Activated B cell treated with CpG ODN at 0.5 μM for 24 hours (primary cell): ENCODE measurements at regions of chr1 and their contacts with region 1.

Region 1: GRCh38 chr1:150813058-150813707 is 5.1 kb upstream of the CTSK start:
- DNase-seq: no peak
- ATAC-seq: no peak
- H3K4me3 Mint-ChIP-seq: no peak overlapping the region
- H3K27ac Mint-ChIP-seq: no peak overlapping the region
- H3K4me1 Mint-ChIP-seq: no peaks in the 10 kb centered on the region
- H3K27me3 Mint-ChIP-seq: no peaks in the 10 kb centered on the region
- CTCF ChIP-seq: no peak

Region 2: GRCh38 chr1:150346316-150346715 is 466.9 kb before region 1 on chr1:
- CTCF ChIA-PET with region 1: no interaction called
- POLR2A ChIA-PET with region 1: no interaction called
- intact Hi-C with region 1: no loop called
- DNase-seq: no peak
- ATAC-seq: no peak
- H3K4me3 Mint-ChIP-seq: no peak overlapping the region
- H3K27ac Mint-ChIP-seq: no peak overlapping the region
- H3K4me1 Mint-ChIP-seq: no peaks in the 10 kb centered on the region
- H3K27me3 Mint-ChIP-seq: no peaks in the 10 kb centered on the region
- CTCF ChIP-seq: no peak

Region 3: GRCh38 chr1:150760013-150760412 is 53.2 kb before region 1 on chr1:
- CTCF ChIA-PET with region 1: interaction called, 3 read pairs
- POLR2A ChIA-PET with region 1: no interaction called
- intact Hi-C with region 1: loop called (anchors 1 kb)
- DNase-seq: no peak
- ATAC-seq: peak; percentile 56
- H3K4me3 Mint-ChIP-seq: peak overlapping the region; percentile 21
- H3K27ac Mint-ChIP-seq: peak overlapping the region; percentile 72
- H3K4me1 Mint-ChIP-seq: peaks cover 46% of the 10 kb centered on the region
- H3K27me3 Mint-ChIP-seq: no peaks in the 10 kb centered on the region
- CTCF ChIP-seq: no peak

Region 4: GRCh38 chr1:150765296-150765976 is 47.7 kb before region 1 on chr1 and contains the start of gene CTSS:
- CTCF ChIA-PET with region 1: interaction called, 3 read pairs
- POLR2A ChIA-PET with region 1: interaction called, 4 read pairs
- intact Hi-C with region 1: loop called (anchors 1 kb)
- DNase-seq: no peak
- ATAC-seq: peak; percentile 88
- H3K4me3 Mint-ChIP-seq: peak within 1 kb of the TSS; percentile 93
- H3K27ac Mint-ChIP-seq: peak within 1 kb of the TSS; percentile 97
- H3K4me1 Mint-ChIP-seq: peaks cover 55% of the 10 kb centered on the region
- H3K27me3 Mint-ChIP-seq: no peaks in the 10 kb centered on the region
- CTCF ChIP-seq: no peak
- total RNA-seq, gene CTSS: 162 and 165 TPM in 2 replicates

Region 5: DNA sequence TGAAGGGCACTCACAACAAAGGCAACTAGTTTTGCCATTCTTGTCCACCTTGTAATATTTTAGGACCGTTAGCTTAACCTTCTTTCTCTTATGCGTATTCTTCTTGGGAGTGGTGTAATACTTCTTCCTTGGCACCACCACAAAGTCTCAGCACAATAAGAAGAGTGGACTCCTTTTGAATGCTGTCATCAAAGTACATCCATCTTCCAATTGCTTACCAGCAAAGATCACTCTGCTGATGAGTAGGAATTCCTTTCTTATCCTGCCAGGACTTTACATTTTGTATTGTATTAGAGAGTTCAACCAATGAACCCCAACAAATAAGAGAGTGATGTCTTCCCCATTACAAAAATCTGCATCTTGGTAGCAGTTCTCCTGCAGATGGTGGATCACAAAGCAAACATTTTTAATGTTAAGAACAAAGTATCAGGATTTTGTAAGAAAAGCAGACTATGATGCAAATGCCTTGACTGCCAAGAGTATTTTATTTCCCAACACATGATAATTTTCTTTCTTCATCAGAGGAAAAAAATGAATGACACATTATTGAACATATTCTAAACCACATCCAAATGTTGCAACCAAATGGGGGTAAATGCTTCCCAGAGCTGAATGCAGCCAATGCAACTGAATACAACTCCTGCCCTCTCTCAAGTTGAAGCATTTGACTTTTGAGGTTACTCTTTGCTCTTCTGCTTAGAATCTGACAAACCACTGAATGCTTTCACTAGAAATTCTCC is 68.3 kb after region 1 on chr1:
- CTCF ChIA-PET with region 1: no interaction called
- POLR2A ChIA-PET with region 1: interaction called, 10 read pairs
- intact Hi-C with region 1: no loop called
- DNase-seq: no peak
- ATAC-seq: no peak
- H3K4me3 Mint-ChIP-seq: no peak overlapping the region
- H3K27ac Mint-ChIP-seq: no peak overlapping the region
- H3K4me1 Mint-ChIP-seq: peaks cover 11% of the 10 kb centered on the region
- H3K27me3 Mint-ChIP-seq: no peaks in the 10 kb centered on the region
- CTCF ChIP-seq: no peak